Activated T-helper 1 cell treated with anti-CD3 and anti-CD28 coated beads, Interleukin-12 subunit alpha, Interleukin-12 subunit beta, Interleukin-2, Interleukin-4 antibody, amounts not matched to agents 30 ng/mL and 10 ng/mL and 1 ng/mL, durations not matched to agents 14 hours and 24 hours and 36 hours (primary cell): ENCODE measurements at regions of chr2 and their contacts with region 1.

Region 1: GRCh38 chr2:130797493-130798435 is 39.0 kb upstream of the ARHGEF4 start:
- DNase-seq: peak; percentile 89
- H3K4me3 Mint-ChIP-seq: peak overlapping the region; percentile 73
- H3K27ac Mint-ChIP-seq: no peak overlapping the region
- H3K4me1 Mint-ChIP-seq: no peaks in the 10 kb centered on the region
- H3K27me3 Mint-ChIP-seq: peaks cover 24% of the 10 kb centered on the region

Region 2: GRCh38 chr2:130727286-130728018 is 70.3 kb before region 1 on chr2:
- intact Hi-C with region 1: loop called (anchors 1 kb)
- DNase-seq: peak; percentile 84
- H3K4me3 Mint-ChIP-seq: peak overlapping the region; percentile 76
- H3K27ac Mint-ChIP-seq: peak overlapping the region; percentile 57
- H3K4me1 Mint-ChIP-seq: peaks cover 12% of the 10 kb centered on the region
- H3K27me3 Mint-ChIP-seq: peaks cover 12% of the 10 kb centered on the region

Region 3: GRCh38 chr2:130737592-130737991 is 60.2 kb before region 1 on chr2:
- intact Hi-C with region 1: no loop called
- DNase-seq: no peak
- H3K4me3 Mint-ChIP-seq: no peak overlapping the region
- H3K27ac Mint-ChIP-seq: no peak overlapping the region
- H3K4me1 Mint-ChIP-seq: no peaks in the 10 kb centered on the region
- H3K27me3 Mint-ChIP-seq: peaks cover 12% of the 10 kb centered on the region

Region 4: GRCh38 chr2:130873700-130874346 is 76.1 kb after region 1 on chr2:
- intact Hi-C with region 1: loop called (anchors 1 kb)
- DNase-seq: peak; percentile 58
- H3K4me3 Mint-ChIP-seq: no peak overlapping the region
- H3K27ac Mint-ChIP-seq: no peak overlapping the region
- H3K4me1 Mint-ChIP-seq: no peaks in the 10 kb centered on the region
- H3K27me3 Mint-ChIP-seq: peaks cover 9% of the 10 kb centered on the region

Region 5: GRCh38 chr2:130966775-130967490 is 169.2 kb after region 1 on chr2:
- intact Hi-C with region 1: loop called (anchors 5 kb)
- DNase-seq: no peak
- H3K4me3 Mint-ChIP-seq: no peak overlapping the region
- H3K27ac Mint-ChIP-seq: no peak overlapping the region
- H3K4me1 Mint-ChIP-seq: peaks cover 17% of the 10 kb centered on the region
- H3K27me3 Mint-ChIP-seq: peaks cover 43% of the 10 kb centered on the region

Region 6: GRCh38 chr2:131673392-131674173 is 875.8 kb after region 1 on chr2:
- intact Hi-C with region 1: loop called (anchors 5 kb)
- DNase-seq: peak; percentile 56
- H3K4me3 Mint-ChIP-seq: no peak overlapping the region
- H3K27ac Mint-ChIP-seq: no peak overlapping the region
- H3K4me1 Mint-ChIP-seq: peaks cover 5% of the 10 kb centered on the region
- H3K27me3 Mint-ChIP-seq: peaks cover 44% of the 10 kb centered on the region